ENCODE measurements at regions of chr3 and their contacts with region 1.

Region 1: DNA sequence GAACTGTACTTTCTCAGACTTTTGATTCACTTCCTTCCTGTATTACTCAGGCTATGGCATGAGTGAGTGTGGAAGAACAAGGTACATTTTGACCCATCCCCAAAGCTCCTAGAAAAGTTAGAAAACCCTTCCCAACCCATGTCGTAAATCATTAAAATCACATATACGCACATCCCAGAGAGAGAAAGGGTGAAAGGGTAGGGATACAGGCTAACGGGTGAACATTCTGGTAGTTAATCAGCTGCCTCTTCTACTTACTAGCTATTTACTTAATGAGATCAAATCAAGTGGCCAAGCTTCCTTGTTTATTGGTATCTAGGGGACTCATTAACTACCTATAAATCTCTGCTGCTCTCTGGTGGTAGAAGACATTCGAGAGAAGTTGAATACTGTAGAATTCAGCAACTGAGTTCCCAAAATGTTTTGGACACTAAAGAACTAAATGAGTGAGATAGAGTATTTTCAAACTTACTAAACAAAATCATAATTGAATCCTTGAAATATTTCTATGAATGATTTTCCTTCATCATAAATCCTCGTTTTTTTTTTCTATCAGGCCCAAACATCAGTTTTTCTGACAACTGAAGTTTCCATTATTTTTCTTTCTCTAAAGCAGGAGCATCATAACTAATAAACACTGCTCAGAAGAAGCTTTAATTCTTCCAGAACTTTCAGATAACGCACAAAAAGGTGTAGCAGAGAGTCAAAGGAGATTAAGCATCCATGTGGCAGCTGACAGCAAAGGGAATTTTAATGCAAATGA is 124.2 kb downstream of the IMPG2 start:
- DNase-seq: peak; percentile 91
- ATAC-seq: peak; percentile 81
- H3K4me3 ChIP-seq: no peak overlapping the region
- H3K27ac ChIP-seq: peak overlapping the region; percentile 79
- H3K4me1 ChIP-seq: peaks cover 39% of the 10 kb centered on the region
- H3K27me3 ChIP-seq: no peaks in the 10 kb centered on the region
- CTCF ChIP-seq: peak; percentile 96

Region 2: DNA sequence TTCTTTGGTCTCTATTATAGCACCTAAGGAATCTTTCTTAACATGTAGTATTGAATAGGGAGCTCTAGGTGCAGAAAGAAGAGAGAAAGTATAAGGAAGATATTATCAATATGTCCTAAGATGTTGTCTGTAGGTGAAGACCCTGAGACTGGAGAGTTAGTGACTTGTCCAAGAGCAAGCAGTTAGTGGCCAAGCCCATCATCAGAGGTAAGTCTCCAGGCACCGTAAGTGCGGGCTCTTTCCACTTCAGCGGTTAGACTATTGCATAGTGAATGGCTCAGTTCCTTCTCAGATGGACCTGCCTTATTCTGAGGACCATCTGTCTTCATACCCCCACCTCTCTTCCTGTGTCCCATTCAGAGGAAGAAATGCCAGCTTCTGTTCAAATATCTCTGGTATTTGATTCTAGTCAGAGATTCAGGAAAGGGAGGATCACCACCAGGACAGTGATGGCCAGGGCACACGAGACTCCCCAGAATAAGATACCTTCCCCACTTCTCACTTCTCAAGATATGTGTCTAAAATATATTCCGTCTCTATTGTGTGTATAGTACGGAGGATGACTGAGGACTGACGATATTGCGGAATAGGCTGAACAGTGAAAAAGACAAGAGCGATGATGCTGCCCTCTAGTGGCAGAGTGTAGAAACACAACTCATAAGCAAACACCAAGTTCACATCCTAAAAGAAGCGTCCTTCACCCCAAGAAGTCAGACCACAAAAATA is 605.9 kb before region 1 on chr3:
- CTCF ChIA-PET with region 1: no interaction called
- POLR2A ChIA-PET with region 1: no interaction called
- intact Hi-C with region 1: loop called (anchors 2 kb)
- DNase-seq: peak; percentile 87
- ATAC-seq: peak; percentile 82
- H3K4me3 ChIP-seq: 0 out of 2 replicates have a peak overlapping the region, but pooled peaks have one; percentile 24
- H3K27ac ChIP-seq: no peak overlapping the region
- H3K4me1 ChIP-seq: peaks cover 19% of the 10 kb centered on the region
- H3K27me3 ChIP-seq: no peaks in the 10 kb centered on the region
- CTCF ChIP-seq: peak; percentile 96

Region 3: DNA sequence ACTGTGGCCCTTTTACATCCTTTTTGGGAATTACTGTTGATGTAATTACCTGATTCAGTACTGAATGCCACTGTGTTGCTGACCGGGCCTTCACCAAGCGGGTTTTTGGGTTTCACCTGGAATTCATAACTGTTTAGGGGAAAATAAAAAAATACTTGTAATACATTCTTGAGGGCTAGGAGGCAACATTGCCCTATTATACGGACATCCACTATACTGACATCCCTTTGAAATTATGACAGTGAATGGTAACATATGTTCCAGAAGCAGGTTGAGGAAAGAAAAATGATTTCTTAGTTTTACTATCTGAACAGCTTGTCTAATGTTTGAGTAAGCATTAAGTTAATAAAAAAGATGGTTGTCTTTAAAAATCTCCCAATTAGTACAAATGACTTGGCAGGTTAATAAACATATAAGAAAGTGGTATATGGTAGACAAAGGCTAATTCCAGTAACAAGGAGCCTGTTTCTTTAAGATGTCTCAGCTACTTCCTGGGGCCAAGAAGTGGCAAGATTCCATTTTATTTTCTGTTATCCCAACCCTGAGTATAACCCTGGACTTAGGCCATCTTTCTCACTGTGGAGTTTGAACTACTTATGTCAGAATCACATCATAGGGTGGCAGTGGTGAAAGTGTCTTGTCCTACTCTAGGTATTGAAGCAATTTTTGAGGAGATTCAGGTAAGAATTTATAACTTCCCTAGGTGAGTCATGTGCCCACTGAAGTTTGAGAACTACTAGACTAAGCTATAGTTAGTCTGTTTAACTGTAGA is 441.4 kb before region 1 on chr3:
- CTCF ChIA-PET with region 1: interaction called, 4 read pairs
- POLR2A ChIA-PET with region 1: no interaction called
- intact Hi-C with region 1: loop called (anchors 5 kb)
- DNase-seq: no peak
- ATAC-seq: peak; percentile 15; the same call in 1 of the 2 replicates
- H3K4me3 ChIP-seq: no peak overlapping the region
- H3K27ac ChIP-seq: no peak overlapping the region
- H3K4me1 ChIP-seq: no peaks in the 10 kb centered on the region
- H3K27me3 ChIP-seq: no peaks in the 10 kb centered on the region
- CTCF ChIP-seq: peak; percentile 40; the same call in 1 of the 2 replicates

Region 4: GRCh38 chr3:100893590-100893989 is 302.5 kb before region 1 on chr3:
- CTCF ChIA-PET with region 1: interaction called, 21 read pairs
- POLR2A ChIA-PET with region 1: no interaction called
- intact Hi-C with region 1: loop called (anchors 1 kb)
- DNase-seq: peak; percentile 62
- ATAC-seq: peak; percentile 48; the same call in 1 of the 2 replicates
- H3K4me3 ChIP-seq: no peak overlapping the region
- H3K27ac ChIP-seq: no peak overlapping the region
- H3K4me1 ChIP-seq: peaks cover 31% of the 10 kb centered on the region
- H3K27me3 ChIP-seq: no peaks in the 10 kb centered on the region
- CTCF ChIP-seq: peak; percentile 88

Region 5: DNA sequence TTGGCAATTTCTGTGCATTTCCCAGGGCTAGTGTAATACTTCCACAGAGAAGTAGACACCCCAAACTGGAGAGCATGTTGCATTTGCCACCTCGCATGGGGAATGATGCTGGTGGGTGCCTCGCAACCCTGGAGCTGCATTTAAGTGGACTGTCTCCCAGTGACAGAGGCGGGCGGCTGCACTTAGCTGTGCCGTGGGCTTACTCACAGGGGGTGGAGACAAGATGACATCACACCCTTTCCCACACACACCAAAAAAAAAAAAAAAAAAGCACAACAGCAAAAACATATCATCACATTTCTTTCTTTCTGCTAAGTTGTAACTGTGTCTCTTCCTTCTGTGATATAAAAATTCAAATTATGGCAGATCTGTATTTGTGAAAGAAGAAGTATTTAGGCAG is 202.8 kb before region 1 on chr3 and contains the start of gene ABI3BP:
- CTCF ChIA-PET with region 1: interaction called, 7 read pairs
- POLR2A ChIA-PET with region 1: interaction called, 3 read pairs
- intact Hi-C with region 1: loop called (anchors 1 kb)
- DNase-seq: peak; percentile 84
- ATAC-seq: peak; percentile 89
- H3K4me3 ChIP-seq: peak within 1 kb of the TSS; percentile 66
- H3K27ac ChIP-seq: peak within 1 kb of the TSS; percentile 17
- H3K4me1 ChIP-seq: peaks cover 14% of the 10 kb centered on the region
- H3K27me3 ChIP-seq: no peaks in the 10 kb centered on the region
- CTCF ChIP-seq: no peak
- total RNA-seq, gene ABI3BP: 23.4 and 31.6 TPM in 2 replicates

Region 6: DNA sequence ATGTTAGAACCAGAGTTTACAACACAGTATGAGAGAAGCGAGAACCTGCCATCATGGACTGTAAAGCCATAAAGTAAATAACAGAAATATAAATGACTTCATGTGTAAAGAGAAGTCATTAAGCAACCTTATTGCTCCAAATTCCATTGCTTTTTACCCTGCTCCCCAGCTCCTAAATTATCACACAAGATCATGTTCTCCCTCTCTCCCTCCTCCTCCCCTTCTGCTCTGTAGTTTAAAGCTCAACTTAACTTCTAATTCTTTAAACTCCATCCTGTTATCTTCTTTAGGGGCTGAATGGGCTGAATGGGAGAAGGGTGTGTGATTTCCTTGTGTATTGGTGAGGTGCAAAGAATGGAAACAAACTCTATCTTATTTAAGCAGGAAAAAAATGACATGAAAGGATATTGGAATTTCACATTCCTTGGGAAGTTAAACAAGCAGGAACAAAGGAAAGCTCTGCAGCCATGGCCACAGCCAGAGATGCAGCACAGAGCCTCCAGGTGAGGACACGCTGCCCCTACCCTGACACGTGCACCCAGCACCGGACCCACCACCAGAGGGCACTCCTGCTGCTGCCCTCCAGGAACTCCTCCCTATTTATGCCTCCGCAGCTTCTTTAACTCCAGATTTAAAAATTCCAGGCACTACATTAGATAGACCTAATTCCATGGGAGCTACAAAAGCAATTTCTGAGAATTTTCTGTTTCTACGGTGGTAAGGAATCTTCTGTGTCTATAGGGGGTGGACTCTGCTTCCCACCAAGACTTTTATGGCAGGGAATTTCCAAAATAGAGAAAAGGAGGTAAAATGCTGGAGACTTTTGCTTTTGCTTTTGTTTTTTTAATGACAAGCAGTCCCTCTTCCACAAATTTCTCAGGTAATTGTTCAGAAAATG is 126.0 kb before region 1 on chr3:
- CTCF ChIA-PET with region 1: interaction called, 5 read pairs
- POLR2A ChIA-PET with region 1: no interaction called
- intact Hi-C with region 1: loop called (anchors 1 kb)
- DNase-seq: peak; percentile 70
- ATAC-seq: peak; percentile 23; the same call in 1 of the 2 replicates
- H3K4me3 ChIP-seq: no peak overlapping the region
- H3K27ac ChIP-seq: peak overlapping the region; percentile 22
- H3K4me1 ChIP-seq: peaks cover 52% of the 10 kb centered on the region
- H3K27me3 ChIP-seq: no peaks in the 10 kb centered on the region
- CTCF ChIP-seq: peak; percentile 92

Measured in PC-3 (cell line).